AG04450 (cell line): ENCODE measurements at regions of chr2 and their contacts with region 1.

Region 1: GRCh38 chr2:27170581-27171333 is 22.0 kb downstream of the TCF23 start:
- DNase-seq: no peak
- H3K4me3 ChIP-seq: no peak overlapping the region
- H3K27ac ChIP-seq: no peak overlapping the region
- H3K27me3 ChIP-seq: peaks cover 36% of the 10 kb centered on the region
- CTCF ChIP-seq: no peak

Region 2: GRCh38 chr2:27185331-27186026 is 14.7 kb after region 1 on chr2:
- CTCF ChIA-PET with region 1: interaction called, 15 read pairs
- POLR2A ChIA-PET with region 1: no interaction called
- DNase-seq: no peak
- H3K4me3 ChIP-seq: 0 out of 2 replicates have a peak overlapping the region, but pooled peaks have one; percentile 7
- H3K27ac ChIP-seq: peak overlapping the region; percentile 75
- H3K27me3 ChIP-seq: peaks cover 2% of the 10 kb centered on the region
- CTCF ChIP-seq: no peak